Heart right ventricle (tissue), 16 donors: ENCODE measurements at regions of chr20 and their contacts with region 1.

Region 1: DNA sequence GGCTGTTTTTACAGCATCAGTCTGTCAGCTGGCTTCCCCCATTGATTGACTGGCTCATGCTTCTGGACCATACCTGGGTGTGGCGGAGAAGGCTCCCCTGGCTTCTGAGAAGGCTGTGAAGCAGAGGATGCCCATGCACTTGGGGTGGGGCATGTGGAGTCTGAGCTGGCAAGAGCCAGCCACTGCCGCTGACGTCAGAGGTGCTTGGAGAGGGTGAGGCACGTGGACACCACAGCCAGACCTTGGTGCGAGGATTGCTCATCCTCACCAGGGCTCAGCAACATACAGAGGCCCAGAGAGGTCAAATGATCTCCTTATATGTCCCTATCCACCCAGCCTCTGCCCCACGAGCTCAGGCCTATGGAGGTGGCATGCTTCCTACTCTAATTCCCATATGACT is 211.2 kb upstream of the PMEPA1 start:
- DNase-seq: no peak
- ATAC-seq: no peak
- H3K4me3 ChIP-seq: no peak overlapping the region
- H3K27ac ChIP-seq: no peak overlapping the region
- H3K4me1 ChIP-seq: no peaks in the 10 kb centered on the region
- H3K27me3 ChIP-seq: no peaks in the 10 kb centered on the region
- CTCF ChIP-seq: no peak

Region 2: DNA sequence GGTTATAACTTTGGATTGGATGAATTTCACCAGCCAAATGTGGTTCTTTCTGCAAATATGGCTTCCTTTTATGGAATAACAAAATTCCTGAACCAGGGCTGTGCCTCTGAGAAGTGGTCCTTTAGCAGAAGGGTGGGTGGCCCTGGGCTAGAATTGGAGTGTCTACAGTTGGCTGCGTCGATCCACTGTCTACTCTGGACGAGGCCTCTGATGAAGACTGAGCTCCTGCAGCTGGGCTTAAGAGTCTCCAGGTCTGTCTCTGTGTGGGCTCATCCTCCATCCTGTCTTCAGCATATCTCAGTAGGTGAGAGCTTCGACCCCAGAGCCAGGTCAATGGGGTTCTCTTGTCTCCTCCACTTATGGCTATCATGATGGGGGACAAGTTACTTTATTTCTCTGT is 44.8 kb before region 1 on chr20:
- intact Hi-C with region 1: loop called in 1 of 10 experiments (anchors 1 kb)
- DNase-seq: no peak
- ATAC-seq: no peak
- H3K4me3 ChIP-seq: no peak overlapping the region
- H3K27ac ChIP-seq: no peak overlapping the region
- H3K4me1 ChIP-seq: peaks cover 0 to 27% (median 0%) of the 10 kb centered on the region in 9 donors
- H3K27me3 ChIP-seq: peaks cover 0 to 5% (median 0%) of the 10 kb centered on the region in 7 donors
- CTCF ChIP-seq: no peak

Region 3: DNA sequence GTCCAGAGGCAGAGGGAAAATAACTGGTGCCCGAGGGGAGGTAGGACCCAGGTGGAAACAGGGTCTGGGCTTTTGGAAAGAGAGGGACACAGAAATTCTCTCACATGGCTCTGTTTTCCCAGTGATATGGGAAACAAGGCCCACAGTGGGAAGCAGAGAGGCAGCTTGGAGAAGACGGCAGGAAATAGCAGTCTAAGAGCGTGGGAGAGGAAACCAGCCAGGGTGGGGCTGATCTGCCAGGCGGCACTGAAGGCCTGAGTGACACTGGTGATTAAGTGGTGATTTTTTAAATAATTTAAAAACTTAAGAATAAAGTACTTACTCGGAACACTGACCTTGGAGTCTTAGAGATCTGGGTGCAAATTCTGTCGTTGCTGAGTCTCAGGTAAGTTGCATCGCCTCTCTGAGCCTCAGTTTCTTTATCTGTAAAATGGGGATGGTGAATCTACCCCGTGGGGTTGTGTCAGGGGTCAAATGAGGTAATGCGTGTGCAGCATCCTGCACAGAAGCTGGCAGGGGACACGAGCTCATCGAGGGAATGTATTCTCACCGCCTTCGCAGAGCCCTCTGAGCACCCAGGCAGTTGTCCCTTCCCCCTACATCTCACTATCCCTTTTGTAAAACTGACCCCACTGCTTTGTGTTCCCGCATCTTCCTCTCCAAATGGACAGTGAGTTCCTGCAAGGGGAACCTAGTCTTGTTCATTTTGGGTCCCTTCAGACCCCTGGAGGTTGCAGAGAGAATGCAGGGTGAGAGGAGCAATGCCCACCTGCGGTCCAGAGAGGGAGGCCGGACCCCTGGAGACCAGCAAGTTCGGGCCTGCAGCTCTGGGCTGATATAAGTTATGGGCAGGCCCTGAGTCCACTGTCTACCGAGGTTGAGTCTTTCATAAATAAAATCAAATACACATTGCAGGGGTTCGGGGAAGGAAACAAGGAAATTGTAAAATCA is 17.5 kb after region 1 on chr20:
- intact Hi-C with region 1: loop called in 1 of 10 experiments (anchors 1 kb)
- DNase-seq: peak in 1 of 2 donors; percentile 20
- ATAC-seq: peak in 7 of 8 donors; percentile 37 to 81 (median 69)
- H3K4me3 ChIP-seq: no peak overlapping the region
- H3K27ac ChIP-seq: peak overlapping the region in 3 of 10 donors; percentile 14 to 67 (median 46)
- H3K4me1 ChIP-seq: peaks cover 0 to 21% (median 7%) of the 10 kb centered on the region in 9 donors
- H3K27me3 ChIP-seq: peaks cover 0 to 4% (median 0%) of the 10 kb centered on the region in 7 donors
- CTCF ChIP-seq: no peak